Esophagus muscularis mucosa (tissue), 4 donors: ENCODE measurements at regions of chr5 and their contacts with region 1.

Region 1: DNA sequence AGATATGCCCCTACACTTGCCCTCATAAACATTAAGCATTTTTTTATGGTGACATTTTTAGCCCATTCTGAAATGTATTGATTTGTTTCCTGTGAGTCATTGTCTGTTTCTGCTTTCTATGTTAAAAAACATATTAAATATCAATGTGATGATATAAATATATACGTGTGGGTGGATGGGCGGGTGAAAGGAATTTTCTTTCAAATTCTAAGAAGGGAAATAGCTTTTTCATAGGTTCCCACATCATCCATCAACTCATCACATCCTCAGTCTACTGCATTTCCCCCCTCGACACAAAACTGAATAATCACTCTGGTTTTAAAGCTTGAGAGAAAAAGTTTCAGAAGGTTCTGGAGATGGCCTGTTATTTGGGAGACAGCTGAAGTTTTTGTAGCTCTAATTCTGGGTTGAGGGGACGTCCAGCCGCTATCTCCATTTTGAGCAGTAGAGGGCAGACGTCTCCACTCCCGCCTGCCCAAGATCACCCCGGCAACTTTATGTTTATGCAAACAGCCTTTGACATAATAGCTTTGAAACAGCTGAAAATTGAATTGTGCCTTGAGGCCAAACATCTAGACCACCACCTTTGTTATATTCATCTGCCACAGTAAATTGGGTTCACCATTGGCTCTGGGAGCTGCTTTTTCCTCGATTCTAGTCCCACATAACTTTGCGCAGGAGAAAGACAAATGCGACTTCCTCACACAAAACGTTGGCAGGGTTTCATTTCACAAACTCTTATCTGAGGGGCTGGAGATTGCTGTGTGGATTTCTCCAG is 216.2 kb upstream of the CLINT1 start:
- DNase-seq: peak; percentile 94
- H3K4me3 ChIP-seq: peak overlapping the region; percentile 32 to 49 (median 38)
- H3K27ac ChIP-seq: peak overlapping the region in 1 of 4 donors; percentile 51
- H3K4me1 ChIP-seq: peaks cover 0 to 11% (median 6%) of the 10 kb centered on the region in 4 donors
- H3K27me3 ChIP-seq: no peaks in the 10 kb centered on the region
- CTCF ChIP-seq: peak; percentile 69 to 89 (median 84)
- EP300 ChIP-seq: no peak
- POLR2A ChIP-seq: no peak

Region 2: DNA sequence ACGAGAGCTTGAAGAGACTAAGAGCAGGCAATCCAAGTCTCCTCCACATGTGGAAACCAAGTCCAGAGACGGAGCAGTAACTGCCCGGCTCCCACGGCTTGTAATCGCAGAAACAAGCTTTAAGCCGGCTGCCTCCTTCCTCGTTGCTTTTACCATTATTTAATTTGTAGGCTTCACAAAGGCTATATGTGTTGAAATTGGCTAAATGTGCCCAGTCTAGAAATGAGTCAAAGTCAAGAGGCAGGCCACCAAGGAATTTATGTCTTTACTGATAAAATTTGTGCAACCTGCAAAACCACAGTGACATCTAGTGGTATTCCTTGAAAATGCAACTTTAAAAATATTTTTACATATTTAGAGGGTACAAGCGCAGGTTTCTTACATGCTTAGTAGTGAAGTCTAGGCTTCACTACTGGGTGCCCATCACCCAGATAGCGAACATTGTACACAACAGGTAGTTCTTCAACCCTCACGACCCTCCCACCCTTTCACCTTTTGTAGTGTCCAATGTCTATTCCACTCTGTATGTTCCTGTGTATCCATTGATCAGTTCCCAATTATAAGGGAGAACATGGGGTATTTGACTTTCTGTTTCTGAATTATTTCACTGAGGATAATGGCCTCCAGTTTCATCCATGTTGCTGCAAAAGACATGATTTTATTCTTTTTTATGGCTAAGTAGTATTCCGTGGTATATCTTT is 1058.0 kb after region 1 on chr5:
- intact Hi-C with region 1: loop called (anchors 5 kb)
- DNase-seq: no peak
- H3K4me3 ChIP-seq: no peak overlapping the region
- H3K27ac ChIP-seq: no peak overlapping the region
- H3K4me1 ChIP-seq: peaks cover 0 to 10% (median 9%) of the 10 kb centered on the region in 4 donors
- H3K27me3 ChIP-seq: peaks cover 0 to 2% (median 0%) of the 10 kb centered on the region in 4 donors
- CTCF ChIP-seq: peak; percentile 67 to 84 (median 84)
- EP300 ChIP-seq: no peak
- POLR2A ChIP-seq: no peak